HEK293 (cell line): ENCODE measurements at regions of chr14 and their contacts with region 1.

Region 1: GRCh38 chr14:72651081-72651480 is 242.8 kb downstream of the DPF3 start:
- H3K4me3 ChIP-seq: no peak overlapping the region
- H3K27ac ChIP-seq: no peak overlapping the region
- H3K4me1 ChIP-seq: no peaks in the 10 kb centered on the region
- CTCF ChIP-seq: no peak

Region 2: GRCh38 chr14:72448212-72448611 is 202.9 kb before region 1 on chr14:
- CTCF ChIA-PET with region 1: no interaction called
- POLR2A ChIA-PET with region 1: no interaction called
- H3K4me3 ChIP-seq: no peak overlapping the region
- H3K27ac ChIP-seq: no peak overlapping the region
- H3K4me1 ChIP-seq: 0 out of 2 replicates have a peak, but pooled peaks cover 2% of the 10 kb centered on the region
- CTCF ChIP-seq: no peak

Region 3: DNA sequence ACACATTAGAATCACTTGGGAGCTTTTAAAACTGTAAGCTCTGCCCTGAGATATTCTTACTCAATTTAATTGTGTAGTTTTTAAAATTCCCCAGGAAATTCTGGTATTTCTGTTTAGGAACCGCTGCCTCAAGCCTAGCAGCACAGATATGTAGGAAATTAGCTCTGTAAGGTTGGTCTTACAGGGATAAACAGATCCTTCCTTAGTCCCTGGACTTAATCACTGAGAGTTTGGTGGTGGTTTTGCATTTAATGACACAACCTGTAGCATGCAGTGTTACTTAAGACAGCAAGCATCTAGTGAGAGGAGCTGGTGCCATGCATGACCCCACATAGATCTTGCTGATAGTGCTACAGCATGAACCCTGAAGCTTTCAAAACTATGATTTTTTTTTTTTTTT is 566.3 kb after region 1 on chr14:
- CTCF ChIA-PET with region 1: interaction called, 10 read pairs
- POLR2A ChIA-PET with region 1: no interaction called
- H3K4me3 ChIP-seq: no peak overlapping the region
- H3K27ac ChIP-seq: no peak overlapping the region
- H3K4me1 ChIP-seq: no peaks in the 10 kb centered on the region
- CTCF ChIP-seq: no peak